ENCODE measurements at regions of chr17 and their contacts with region 1.

Region 1: DNA sequence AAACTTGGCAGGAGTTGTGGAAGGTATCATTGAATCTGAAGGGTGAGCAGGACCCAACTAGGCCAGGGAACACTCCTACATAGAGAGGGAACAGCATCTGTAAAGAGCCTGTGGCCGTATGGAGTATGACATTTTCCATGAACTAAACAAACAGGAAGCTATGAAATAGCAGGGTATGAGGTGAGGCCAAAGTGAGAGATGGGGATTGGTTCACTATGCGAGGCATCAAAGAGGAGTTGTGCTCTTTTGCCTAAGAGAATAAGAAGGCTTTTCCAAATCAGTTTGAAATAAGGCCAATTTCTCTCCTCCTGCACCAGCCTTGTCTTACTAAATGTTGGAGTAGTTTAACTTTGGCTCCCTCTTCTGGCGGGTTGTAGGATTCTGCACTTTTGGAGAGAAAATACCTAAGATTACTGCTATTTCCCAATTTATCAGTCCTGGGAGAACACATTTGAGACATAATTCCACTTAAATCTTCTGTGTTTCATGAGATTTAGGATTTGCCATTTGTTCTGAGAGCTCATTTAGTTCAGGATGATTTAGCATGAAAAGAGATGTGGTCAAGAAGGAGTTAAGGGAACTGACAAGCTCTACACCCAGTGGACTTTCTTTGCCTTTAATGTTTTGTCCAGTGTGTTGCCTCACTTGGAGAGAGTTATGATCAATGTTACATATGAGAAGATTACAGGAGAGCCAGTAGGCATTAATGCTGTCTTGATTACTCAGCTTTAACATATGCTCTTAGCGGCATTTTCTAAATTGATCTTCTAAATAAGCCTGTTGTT is 55.4 kb downstream of the TNRC6C start:
- DNase-seq: peak; percentile 26 to 37
- H3K4me3 ChIP-seq: no peak overlapping the region
- H3K27ac ChIP-seq: no peak overlapping the region
- H3K4me1 ChIP-seq: no peaks in the 10 kb centered on the region
- H3K27me3 ChIP-seq: peaks cover 61% of the 10 kb centered on the region
- CTCF ChIP-seq: peak; percentile 75

Region 2: GRCh38 chr17:77542551-77543490 is 471.1 kb before region 1 on chr17:
- CTCF ChIA-PET with region 1: interaction called, 11 read pairs
- POLR2A ChIA-PET with region 1: no interaction called
- intact Hi-C with region 1: loop called (anchors 2 kb)
- DNase-seq: peak; percentile 53 to 54
- H3K4me3 ChIP-seq: no peak overlapping the region
- H3K27ac ChIP-seq: no peak overlapping the region
- H3K4me1 ChIP-seq: no peaks in the 10 kb centered on the region
- H3K27me3 ChIP-seq: peaks cover 55% of the 10 kb centered on the region
- CTCF ChIP-seq: peak; percentile 76

Measured in PC-9 (cell line).